ENCODE measurements at regions of chr3 and their contacts with region 1.

Region 1: GRCh38 chr3:106473576-106474475 is 605.0 kb upstream of the CBLB start:
- DNase-seq: no peak
- H3K4me3 Mint-ChIP-seq: no peak overlapping the region
- H3K27ac Mint-ChIP-seq: peak overlapping the region; percentile 94
- H3K4me1 Mint-ChIP-seq: peaks cover 18% of the 10 kb centered on the region
- H3K27me3 Mint-ChIP-seq: no peaks in the 10 kb centered on the region

Region 2: DNA sequence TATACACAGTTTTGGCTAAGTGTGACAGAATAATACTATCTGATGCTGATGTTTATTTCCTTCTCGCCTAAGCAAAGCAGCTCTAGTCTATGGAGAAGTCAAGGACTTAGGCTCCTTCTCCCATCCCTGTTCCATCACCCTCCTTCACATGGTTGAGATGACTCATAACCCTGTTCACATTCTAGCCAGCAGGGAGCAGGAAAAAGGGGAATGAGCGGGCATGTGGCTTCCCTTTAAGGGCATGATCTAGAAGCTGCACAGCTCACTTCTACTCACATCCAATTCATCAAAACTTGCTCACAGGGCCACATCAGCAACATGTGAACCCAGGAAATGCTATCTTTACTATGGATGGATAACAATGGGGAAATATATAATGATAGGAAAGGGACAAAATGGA is 645.9 kb before region 1 on chr3:
- intact Hi-C with region 1: loop called (anchors 1 kb)
- DNase-seq: no peak
- H3K4me3 Mint-ChIP-seq: peak overlapping the region; percentile 57
- H3K27ac Mint-ChIP-seq: peak overlapping the region; percentile 96
- H3K4me1 Mint-ChIP-seq: peaks cover 88% of the 10 kb centered on the region
- H3K27me3 Mint-ChIP-seq: no peaks in the 10 kb centered on the region

Region 3: GRCh38 chr3:105976196-105976595 is 497.6 kb before region 1 on chr3:
- intact Hi-C with region 1: no loop called
- DNase-seq: no peak
- H3K4me3 Mint-ChIP-seq: no peak overlapping the region
- H3K27ac Mint-ChIP-seq: no peak overlapping the region
- H3K4me1 Mint-ChIP-seq: peaks cover 4% of the 10 kb centered on the region
- H3K27me3 Mint-ChIP-seq: no peaks in the 10 kb centered on the region

Region 4: GRCh38 chr3:106215047-106215446 is 258.8 kb before region 1 on chr3:
- intact Hi-C with region 1: loop called (anchors 1 kb)
- DNase-seq: peak; percentile 5
- H3K4me3 Mint-ChIP-seq: peak overlapping the region; percentile 43
- H3K27ac Mint-ChIP-seq: peak overlapping the region; percentile 82
- H3K4me1 Mint-ChIP-seq: peaks cover 56% of the 10 kb centered on the region
- H3K27me3 Mint-ChIP-seq: no peaks in the 10 kb centered on the region

Region 5: DNA sequence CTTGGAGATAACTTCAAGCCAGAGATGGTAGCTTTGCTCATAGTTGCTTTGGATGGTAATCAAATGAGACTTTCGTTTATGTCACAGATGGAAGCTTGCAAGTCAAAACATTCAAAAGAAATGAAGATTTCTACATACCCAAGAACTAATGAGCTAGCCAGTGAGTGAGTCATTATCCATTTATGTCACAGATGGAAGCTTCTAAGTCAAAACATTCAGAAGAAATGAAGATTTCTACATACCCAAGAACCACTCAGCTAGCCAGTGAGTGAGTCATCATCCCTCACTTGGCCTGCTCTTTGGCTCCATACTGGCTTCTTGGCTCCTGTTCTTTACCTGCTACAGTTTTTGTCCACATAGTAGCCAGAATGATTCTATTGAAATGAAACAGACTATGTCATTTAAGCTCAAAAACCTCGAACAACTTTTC is 45.2 kb before region 1 on chr3:
- intact Hi-C with region 1: loop called (anchors 1 kb)
- DNase-seq: no peak
- H3K4me3 Mint-ChIP-seq: no peak overlapping the region
- H3K27ac Mint-ChIP-seq: peak overlapping the region; percentile 93
- H3K4me1 Mint-ChIP-seq: peaks cover 57% of the 10 kb centered on the region
- H3K27me3 Mint-ChIP-seq: no peaks in the 10 kb centered on the region

Region 6: DNA sequence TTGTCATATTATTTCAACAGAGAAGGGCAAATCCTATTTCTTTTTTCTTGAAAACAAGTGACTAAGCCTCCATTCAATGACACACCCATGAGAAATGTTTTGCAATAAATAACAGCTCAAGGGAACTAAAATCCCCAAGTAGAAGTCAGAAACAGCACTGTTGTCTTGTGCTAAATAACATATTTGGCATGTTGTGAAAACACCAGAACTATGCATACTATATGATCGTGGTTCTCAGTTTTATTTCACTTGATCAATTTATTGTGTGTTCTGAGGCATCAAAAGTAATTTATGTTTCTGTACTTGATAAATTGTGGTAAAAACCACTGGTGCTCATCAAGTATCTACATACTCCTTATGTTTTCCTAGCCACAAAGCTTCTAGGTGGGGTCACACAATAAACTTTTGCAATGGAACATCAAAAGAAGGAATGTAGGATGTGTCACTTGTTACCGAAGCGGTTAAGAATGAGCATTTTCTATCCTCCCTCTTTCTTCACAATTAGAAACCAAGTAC is 86.7 kb after region 1 on chr3:
- intact Hi-C with region 1: loop called (anchors 1 kb)
- DNase-seq: no peak
- H3K4me3 Mint-ChIP-seq: no peak overlapping the region
- H3K27ac Mint-ChIP-seq: no peak overlapping the region
- H3K4me1 Mint-ChIP-seq: peaks cover 10% of the 10 kb centered on the region
- H3K27me3 Mint-ChIP-seq: no peaks in the 10 kb centered on the region